Heart right ventricle (tissue), 16 donors: ENCODE measurements at regions of chr1 and their contacts with region 1.

Region 1: DNA sequence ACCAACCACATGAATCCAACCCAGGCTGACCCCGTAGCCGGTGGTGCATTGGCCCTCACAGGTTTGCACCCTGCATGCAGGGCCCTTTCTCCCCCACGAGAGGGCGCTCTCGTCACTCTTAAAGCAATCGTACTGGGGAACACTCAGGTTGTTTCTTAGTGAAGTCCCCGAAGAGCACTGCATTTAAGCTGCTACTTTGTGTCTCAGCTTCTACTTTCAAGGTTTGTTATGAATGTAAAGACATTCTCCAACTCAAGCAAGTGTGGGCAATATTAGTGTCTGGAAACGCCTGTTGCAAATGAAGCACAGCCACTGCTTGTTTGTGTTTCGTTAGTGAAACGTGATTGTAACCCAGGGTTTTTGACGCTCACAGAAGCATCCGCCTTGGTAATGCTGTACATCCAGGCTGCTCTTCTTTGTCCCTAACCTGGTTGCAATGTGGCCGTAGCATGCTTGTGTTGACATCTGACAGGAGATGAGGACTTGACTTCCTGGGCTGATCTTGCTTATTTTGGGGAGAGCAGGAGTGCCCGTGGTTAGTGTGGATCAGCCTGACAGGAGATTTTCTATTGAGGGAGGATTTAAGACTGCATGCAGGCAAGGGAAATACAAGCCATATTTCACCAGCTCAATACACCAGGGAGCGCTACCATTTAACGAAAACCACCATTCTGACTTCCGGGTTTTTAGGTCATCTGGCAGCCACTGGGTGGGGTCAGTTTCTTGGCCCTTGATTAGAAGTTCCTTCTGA is 79.8 kb downstream of the ST6GALNAC3 start:
- DNase-seq: peak; percentile 71
- ATAC-seq: peak; percentile 89 to 96 (median 93)
- H3K4me3 ChIP-seq: peak overlapping the region in 8 of 10 donors; percentile 6 to 54 (median 43)
- H3K27ac ChIP-seq: peak overlapping the region in 8 of 10 donors; percentile 10 to 83 (median 52)
- H3K4me1 ChIP-seq: peaks cover 0 to 23% (median 12%) of the 10 kb centered on the region in 9 donors
- H3K27me3 ChIP-seq: no peaks in the 10 kb centered on the region
- CTCF ChIP-seq: peak; percentile 88 to 98 (median 93)

Region 2: DNA sequence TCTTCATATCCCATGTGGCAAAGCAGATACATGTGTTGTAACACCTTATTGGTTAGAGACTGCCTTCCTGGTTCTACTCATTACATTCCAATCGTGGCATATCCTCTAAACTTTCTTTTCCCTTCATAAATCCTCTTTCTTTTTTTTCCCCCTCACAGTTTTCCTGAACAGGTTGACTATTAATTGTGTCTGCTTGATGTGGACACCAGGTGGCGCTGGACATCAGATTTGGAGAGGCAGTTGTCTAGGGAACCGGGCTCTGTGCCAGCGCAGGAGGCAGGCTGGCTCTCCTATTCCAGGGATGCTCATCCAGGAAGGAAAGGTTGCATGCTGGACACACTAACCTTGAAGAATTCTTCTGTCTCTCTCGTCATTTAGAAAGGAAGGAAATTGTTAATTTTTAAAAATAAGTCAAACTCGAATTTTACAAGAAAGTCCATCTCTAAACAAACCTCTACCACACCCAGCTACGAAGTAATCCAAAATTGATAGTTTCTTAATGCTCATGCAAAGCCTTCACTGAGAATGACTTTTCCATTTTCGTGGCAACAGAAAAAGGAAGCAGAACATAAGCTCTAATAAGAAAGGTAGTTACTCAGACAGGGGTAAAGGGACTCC is 162.8 kb before region 1 on chr1:
- intact Hi-C with region 1: loop called in 4 of 10 experiments (anchors 5 to 10 kb)
- DNase-seq: peak; percentile 83 to 88
- ATAC-seq: peak in 5 of 8 donors; percentile 61 to 76 (median 74)
- H3K4me3 ChIP-seq: no peak overlapping the region
- H3K27ac ChIP-seq: no peak overlapping the region
- H3K4me1 ChIP-seq: no peaks in the 10 kb centered on the region
- H3K27me3 ChIP-seq: peaks cover 0 to 26% (median 12%) of the 10 kb centered on the region in 7 donors
- CTCF ChIP-seq: peak; percentile 67 to 89 (median 80)

Region 3: GRCh38 chr1:76035053-76035452 is 119.3 kb before region 1 on chr1:
- intact Hi-C with region 1: loop called in 1 of 10 experiments (anchors 5 kb)
- DNase-seq: no peak
- ATAC-seq: no peak
- H3K4me3 ChIP-seq: no peak overlapping the region
- H3K27ac ChIP-seq: no peak overlapping the region
- H3K4me1 ChIP-seq: no peaks in the 10 kb centered on the region
- H3K27me3 ChIP-seq: no peaks in the 10 kb centered on the region
- CTCF ChIP-seq: peak in 8 of 9 donors; percentile 11 to 60 (median 35)

Region 4: GRCh38 chr1:76330991-76331603 is 176.7 kb after region 1 on chr1:
- intact Hi-C with region 1: loop called in 3 of 10 experiments (anchors 10 kb)
- DNase-seq: peak in 1 of 2 donors; percentile 14
- ATAC-seq: peak in 1 of 8 donors; percentile 60
- H3K4me3 ChIP-seq: no peak overlapping the region
- H3K27ac ChIP-seq: no peak overlapping the region
- H3K4me1 ChIP-seq: peaks cover 0 to 6% (median 0%) of the 10 kb centered on the region in 9 donors
- H3K27me3 ChIP-seq: no peaks in the 10 kb centered on the region
- CTCF ChIP-seq: peak; percentile 72 to 92 (median 86)

Region 5: GRCh38 chr1:77126307-77126706 is 971.9 kb after region 1 on chr1:
- intact Hi-C with region 1: loop called in 4 of 10 experiments (anchors 2 to 5 kb)
- DNase-seq: peak in 1 of 2 donors; percentile 17
- ATAC-seq: peak in 2 of 8 donors; percentile 50 to 63
- H3K4me3 ChIP-seq: no peak overlapping the region
- H3K27ac ChIP-seq: no peak overlapping the region
- H3K4me1 ChIP-seq: no peaks in the 10 kb centered on the region
- H3K27me3 ChIP-seq: no peaks in the 10 kb centered on the region
- CTCF ChIP-seq: peak in 7 of 9 donors; percentile 42 to 58 (median 52)

Region 6: DNA sequence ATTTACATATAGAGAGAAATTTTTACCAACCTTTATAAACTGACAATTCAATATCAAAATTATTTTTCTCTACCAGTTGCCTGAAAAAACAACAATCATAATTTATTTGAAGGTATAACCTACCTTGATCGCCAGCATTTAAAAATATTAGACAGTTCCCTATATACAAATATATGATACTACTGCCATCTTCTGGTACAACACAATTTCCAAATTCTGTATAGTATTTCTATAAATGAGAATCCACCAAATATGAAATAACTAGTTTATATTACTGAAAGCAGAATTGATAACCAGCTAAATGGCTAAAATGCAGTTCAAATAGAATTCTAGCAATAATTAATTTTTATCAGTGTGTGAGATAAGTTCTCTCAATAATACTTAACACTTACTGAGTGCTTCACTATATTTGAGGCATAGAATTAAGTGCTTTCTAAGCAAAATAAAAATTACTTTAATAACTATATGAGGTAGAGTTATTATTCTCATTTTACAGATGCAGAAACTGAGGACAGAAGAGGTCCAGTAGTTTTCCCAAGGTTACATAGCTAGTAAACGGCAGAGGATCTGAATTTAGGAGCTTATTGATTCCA is 989.2 kb after region 1 on chr1:
- intact Hi-C with region 1: loop called in 2 of 10 experiments (anchors 5 kb)
- DNase-seq: no peak
- ATAC-seq: no peak
- H3K4me3 ChIP-seq: no peak overlapping the region
- H3K27ac ChIP-seq: no peak overlapping the region
- H3K4me1 ChIP-seq: no peaks in the 10 kb centered on the region
- H3K27me3 ChIP-seq: no peaks in the 10 kb centered on the region
- CTCF ChIP-seq: peak in 7 of 9 donors; percentile 15 to 51 (median 40)